Common myeloid progenitor, CD34-positive (primary cell): ENCODE measurements at regions of chr11 and their contacts with region 1.

Region 1: DNA sequence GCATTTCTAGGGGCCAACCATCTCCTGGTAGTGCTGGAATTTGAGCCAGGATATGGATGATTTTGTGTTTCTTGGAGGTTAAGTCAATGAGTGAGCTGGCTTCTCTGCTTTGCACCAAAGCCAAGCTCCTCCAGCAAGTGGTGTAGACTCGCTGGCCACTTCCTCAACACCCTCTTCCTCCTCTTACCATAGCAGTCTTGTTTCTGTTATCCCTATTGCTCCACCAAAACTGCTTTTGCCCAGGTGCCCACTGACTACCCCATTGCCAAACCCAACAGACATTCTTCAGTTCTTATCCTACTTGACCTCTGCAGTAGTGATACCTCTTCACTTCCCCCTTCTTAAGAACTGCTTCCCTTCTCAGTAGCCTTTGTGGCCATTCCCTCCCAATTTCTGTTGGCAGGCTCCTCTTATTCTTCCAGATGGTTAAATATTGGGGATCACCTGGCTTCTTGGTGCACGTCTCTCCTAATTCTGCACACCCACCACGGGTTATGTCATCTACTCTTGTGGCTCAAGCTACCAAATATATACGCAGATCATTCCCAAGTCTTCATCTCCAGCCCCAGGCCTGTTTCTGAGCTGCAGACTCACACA is 7.0 kb upstream of the PRG2 start:
- DNase-seq: peak in 1 of 3 donors; percentile 18
- H3K4me3 ChIP-seq: no peak overlapping the region
- H3K27ac ChIP-seq: no peak overlapping the region
- H3K4me1 ChIP-seq: peaks cover 0 to 24% (median 1%) of the 10 kb centered on the region in 4 experiments
- H3K27me3 ChIP-seq: no peaks in the 10 kb centered on the region

Region 2: DNA sequence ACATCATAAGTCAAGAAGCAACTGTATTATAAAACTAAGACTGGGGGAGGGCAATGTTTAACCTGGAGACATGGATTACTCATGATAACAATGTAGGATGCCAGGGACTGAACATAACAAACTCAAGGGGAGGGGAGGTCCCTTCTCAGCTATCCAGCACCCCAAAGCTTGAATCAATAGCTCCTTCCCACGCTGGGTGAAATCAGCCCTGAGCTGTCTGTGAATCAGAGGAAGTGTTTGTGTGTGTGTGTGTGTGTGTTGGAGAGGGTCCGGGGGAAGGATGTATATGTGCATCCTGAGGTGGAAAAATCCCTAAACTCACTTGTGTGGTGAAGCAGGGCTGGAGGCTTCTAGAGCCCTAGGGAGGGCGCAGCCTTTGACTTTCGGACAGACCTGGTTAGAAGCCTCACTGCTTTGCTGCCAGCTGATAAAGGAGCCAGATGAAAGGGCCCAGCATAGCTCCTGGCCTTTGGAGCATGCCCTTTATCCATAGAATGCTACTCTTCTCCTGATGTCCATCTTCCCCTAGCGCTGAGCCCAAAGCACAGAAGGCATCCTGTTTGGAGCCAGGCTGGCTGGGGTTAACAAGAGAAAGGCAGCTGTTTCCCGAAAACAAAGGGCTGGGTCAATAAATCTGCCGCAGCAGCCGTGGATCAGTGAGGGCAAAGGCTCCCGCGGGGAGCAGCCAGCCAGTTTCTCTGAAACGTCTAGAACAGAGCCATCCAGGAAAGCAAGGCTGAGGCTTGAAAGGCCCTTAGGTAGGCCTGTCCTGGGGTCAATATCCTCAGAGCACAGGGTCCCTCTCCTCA is 108.5 kb before region 1 on chr11:
- CTCF ChIA-PET with region 1: no interaction called
- POLR2A ChIA-PET with region 1: no interaction called
- DNase-seq: peak in 2 of 3 donors; percentile 19 to 49
- H3K4me3 ChIP-seq: no peak overlapping the region
- H3K27ac ChIP-seq: no peak overlapping the region
- H3K4me1 ChIP-seq: peaks cover 0 to 8% (median 5%) of the 10 kb centered on the region in 4 experiments
- H3K27me3 ChIP-seq: peaks cover 0 to 4% (median 0%) of the 10 kb centered on the region in 5 experiments

Region 3: DNA sequence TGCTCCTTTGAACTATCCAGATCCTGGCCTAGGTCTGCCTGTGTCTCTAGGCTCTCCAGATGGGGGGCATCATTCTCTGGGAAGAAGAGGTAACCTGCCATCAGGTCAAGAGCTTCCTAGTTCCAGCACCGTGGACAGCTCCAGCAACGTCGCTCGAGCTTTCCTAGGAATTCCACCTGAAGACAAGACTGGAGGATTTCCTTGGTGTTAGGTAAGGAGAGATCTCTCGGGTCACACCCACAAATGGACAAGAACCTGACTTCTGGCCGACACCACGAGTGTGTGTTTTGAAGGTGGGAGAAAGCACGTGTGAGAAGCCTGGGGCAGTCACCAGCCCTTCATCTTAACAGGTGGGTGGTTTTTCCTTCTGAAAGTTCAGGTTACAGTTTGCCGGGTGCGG is 17.8 kb before region 1 on chr11:
- CTCF ChIA-PET with region 1: interaction called, 12 read pairs
- POLR2A ChIA-PET with region 1: no interaction called
- DNase-seq: peak in 2 of 3 donors; percentile 25 to 36
- H3K4me3 ChIP-seq: no peak overlapping the region
- H3K27ac ChIP-seq: no peak overlapping the region
- H3K4me1 ChIP-seq: peaks cover 0 to 15% (median 12%) of the 10 kb centered on the region in 4 experiments
- H3K27me3 ChIP-seq: peaks cover 0 to 4% (median 0%) of the 10 kb centered on the region in 5 experiments